Thyroid gland (tissue), 4 donors: ENCODE measurements at regions of chr5 and their contacts with region 1.

Region 1: DNA sequence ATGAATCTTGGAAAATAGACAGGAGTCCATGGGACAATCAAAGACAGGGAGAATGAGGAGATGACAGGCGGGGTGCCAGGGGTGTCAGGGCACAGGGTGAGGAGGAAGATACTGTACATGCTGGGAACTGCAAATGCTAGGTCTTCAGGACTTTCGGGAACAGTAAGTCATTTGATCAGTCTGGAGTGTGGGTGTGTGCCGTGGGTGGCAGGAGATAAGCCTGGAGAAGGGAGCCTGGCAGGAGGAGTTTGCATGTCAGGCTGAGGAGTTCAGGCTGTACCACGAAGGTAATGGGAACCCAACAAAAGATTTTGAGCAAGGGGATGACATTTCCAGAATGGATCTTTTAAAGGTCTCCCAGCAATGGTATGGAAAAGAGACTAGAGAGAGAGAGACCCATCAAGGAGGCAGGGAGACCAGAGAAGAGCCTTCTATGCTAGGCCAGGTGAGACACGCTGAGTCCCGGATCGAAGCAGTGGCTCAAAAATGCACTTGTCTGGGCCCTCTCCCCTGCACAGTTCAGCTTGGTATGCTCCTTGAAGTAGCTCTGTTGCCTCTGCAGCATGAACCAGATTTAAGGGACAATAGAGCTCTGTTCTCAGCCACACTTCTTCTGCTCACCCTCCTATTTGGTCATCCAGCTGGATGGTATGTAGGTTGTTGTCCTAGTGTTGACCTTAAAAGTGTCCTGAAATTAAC is 77.0 kb upstream of the FER start:
- DNase-seq: peak; percentile 19 to 29
- H3K4me3 ChIP-seq: no peak overlapping the region
- H3K27ac ChIP-seq: no peak overlapping the region
- H3K4me1 ChIP-seq: peaks cover 16 to 33% of the 10 kb centered on the region in 2 donors
- H3K27me3 ChIP-seq: no peaks in the 10 kb centered on the region
- CTCF ChIP-seq: no peak
- POLR2A ChIP-seq: no peak

Region 2: DNA sequence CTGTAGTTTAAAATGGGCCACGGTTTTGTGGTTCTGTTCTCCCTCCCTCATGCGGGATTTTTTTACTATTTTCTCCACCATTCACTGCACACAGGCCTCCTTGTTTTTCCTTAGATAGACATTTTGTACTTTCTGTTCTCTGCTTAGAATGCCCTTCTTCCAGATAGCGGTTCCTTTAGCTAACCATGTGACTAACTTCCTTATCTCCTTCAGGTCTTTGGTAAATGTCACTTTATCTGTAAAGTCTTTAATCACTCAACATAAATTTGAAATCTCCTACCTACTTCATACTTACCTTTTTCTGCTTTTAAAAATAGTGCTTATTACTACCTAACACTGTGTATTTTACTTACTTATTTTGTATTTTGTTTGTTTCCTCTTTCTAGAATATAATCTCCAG is 91.9 kb after region 1 on chr5:
- intact Hi-C with region 1: no loop called
- DNase-seq: no peak
- H3K4me3 ChIP-seq: no peak overlapping the region
- H3K27ac ChIP-seq: no peak overlapping the region
- H3K4me1 ChIP-seq: no peaks in the 10 kb centered on the region
- H3K27me3 ChIP-seq: no peaks in the 10 kb centered on the region
- CTCF ChIP-seq: no peak
- POLR2A ChIP-seq: no peak

Region 3: DNA sequence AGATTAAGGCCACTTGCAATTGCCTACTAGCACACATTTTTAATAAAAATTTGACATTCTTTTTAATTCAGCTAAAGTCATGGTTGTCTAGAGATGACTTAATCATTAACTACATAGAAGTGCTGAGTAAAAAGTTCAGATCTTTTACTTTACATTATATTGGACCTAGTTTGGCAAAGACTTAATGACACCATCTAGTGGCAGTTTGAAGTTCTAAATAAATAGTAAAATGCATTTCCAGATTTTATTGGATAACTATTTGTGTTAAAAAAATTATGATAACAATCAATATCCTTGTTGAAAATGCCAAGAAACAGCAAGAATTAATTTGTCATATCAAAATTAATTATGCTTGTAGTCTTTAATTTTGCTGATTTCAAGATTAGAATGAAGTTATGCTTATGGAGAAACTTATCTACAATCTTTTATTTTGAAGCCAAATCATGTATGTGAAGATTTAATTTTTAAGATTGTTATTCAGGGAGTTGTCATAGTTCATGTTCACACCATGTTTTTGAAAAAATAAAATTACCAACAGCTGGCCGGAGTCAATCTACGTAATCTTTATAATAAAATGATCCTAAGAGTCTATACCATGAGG is 808.6 kb after region 1 on chr5:
- intact Hi-C with region 1: loop called (anchors 10 kb)
- DNase-seq: no peak
- H3K4me3 ChIP-seq: no peak overlapping the region
- H3K27ac ChIP-seq: no peak overlapping the region
- H3K4me1 ChIP-seq: no peaks in the 10 kb centered on the region
- H3K27me3 ChIP-seq: no peaks in the 10 kb centered on the region
- CTCF ChIP-seq: peak in 3 of 6 experiments; percentile 28 to 48 (median 47)
- POLR2A ChIP-seq: no peak